HCT116 (cell line): ENCODE measurements at regions of chr10 and their contacts with region 1.

Region 1: GRCh38 chr10:26334932-26335573 is 103.1 kb upstream of the APBB1IP start:
- DNase-seq: peak; percentile 66
- ATAC-seq: peak; percentile 95
- H3K4me3 ChIP-seq: peak overlapping the region; percentile 21 to 48
- H3K27ac ChIP-seq: no peak overlapping the region
- H3K4me1 ChIP-seq: peaks cover 0 to 7% of the 10 kb centered on the region in 2 experiments; a peak in 1 of 4 replicates
- H3K27me3 ChIP-seq: no peaks in the 10 kb centered on the region
- CTCF ChIP-seq: peak; percentile 64 to 84 (median 76)
- POLR2A ChIP-seq: no peak
- RAD21 ChIP-seq: peak; percentile 93

Region 2: GRCh38 chr10:26534384-26534783 is 199.3 kb after region 1 on chr10:
- CTCF ChIA-PET with region 1: interaction called, 11 read pairs
- POLR2A ChIA-PET with region 1: no interaction called
- RAD21 ChIA-PET with region 1: no interaction called
- intact Hi-C with region 1: no loop called
- DNase-seq: peak; percentile 37
- ATAC-seq: peak; percentile 93
- H3K4me3 ChIP-seq: no peak overlapping the region
- H3K27ac ChIP-seq: no peak overlapping the region
- H3K4me1 ChIP-seq: peaks cover 0 to 3% of the 10 kb centered on the region in 2 experiments; a peak in 1 of 4 replicates
- H3K27me3 ChIP-seq: no peaks in the 10 kb centered on the region
- CTCF ChIP-seq: peak; percentile 8 to 72 (median 71); a peak in 4 of 6 replicates
- POLR2A ChIP-seq: no peak
- RAD21 ChIP-seq: peak; percentile 25; the same call in 1 of the 2 replicates

Region 3: GRCh38 chr10:26556748-26557640 is 221.9 kb after region 1 on chr10:
- CTCF ChIA-PET with region 1: interaction called, 40 read pairs
- POLR2A ChIA-PET with region 1: no interaction called
- RAD21 ChIA-PET with region 1: interaction called, 3 read pairs
- intact Hi-C with region 1: no loop called
- DNase-seq: peak; percentile 50
- ATAC-seq: peak; percentile 89
- H3K4me3 ChIP-seq: peak overlapping the region; percentile 10 to 31
- H3K27ac ChIP-seq: no peak overlapping the region
- H3K4me1 ChIP-seq: peaks cover 0 to 7% of the 10 kb centered on the region in 2 experiments; a peak in 2 of 4 replicates
- H3K27me3 ChIP-seq: peaks cover 22% of the 10 kb centered on the region; the same call in 1 of the 2 replicates
- CTCF ChIP-seq: peak; percentile 75 to 93 (median 76)
- POLR2A ChIP-seq: no peak
- RAD21 ChIP-seq: peak; percentile 91

Region 4: DNA sequence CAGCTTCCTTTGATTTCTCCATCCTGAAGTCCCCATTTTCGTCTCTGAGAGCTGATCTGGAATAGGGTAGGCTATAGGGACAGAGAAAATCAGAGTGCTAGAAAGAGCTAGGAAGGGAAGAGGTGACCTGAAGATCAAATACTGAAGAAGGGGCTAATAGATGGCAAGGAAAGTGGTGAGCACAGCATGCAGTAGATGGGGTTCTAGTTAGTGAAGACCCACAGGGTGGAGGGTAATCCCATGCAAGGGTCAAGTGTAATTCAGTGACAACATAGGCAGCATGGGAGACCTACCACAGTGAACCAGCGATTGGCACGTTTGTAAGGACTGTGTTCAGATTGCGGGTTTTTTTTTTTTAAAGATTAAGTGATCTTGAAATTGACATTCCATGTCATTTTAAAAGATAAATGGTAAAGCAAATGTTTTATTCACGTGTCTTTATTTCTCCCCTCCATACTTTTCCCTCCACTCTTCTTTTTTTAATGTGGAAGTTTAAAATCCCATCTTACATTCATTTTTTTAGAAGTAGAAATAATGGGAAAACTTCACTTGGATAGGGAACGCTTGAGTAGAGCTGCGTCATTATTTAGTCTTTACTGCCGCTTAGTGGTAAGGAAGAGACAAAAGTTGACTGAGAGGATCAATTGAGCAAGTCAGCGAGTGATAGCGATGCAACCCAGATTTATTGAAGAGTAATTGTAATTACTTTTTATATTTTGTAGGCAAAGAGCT is 546.7 kb after region 1 on chr10:
- CTCF ChIA-PET with region 1: interaction called, 24 read pairs
- POLR2A ChIA-PET with region 1: no interaction called
- RAD21 ChIA-PET with region 1: interaction called in 1 of 2 experiments, 4 read pairs
- intact Hi-C with region 1: loop called (anchors 1 kb)
- DNase-seq: peak; percentile 69
- ATAC-seq: peak; percentile 95
- H3K4me3 ChIP-seq: peak overlapping the region; percentile 32 to 44
- H3K27ac ChIP-seq: no peak overlapping the region
- H3K4me1 ChIP-seq: peaks cover 0 to 6% of the 10 kb centered on the region in 2 experiments; a peak in 1 of 4 replicates
- H3K27me3 ChIP-seq: no peaks in the 10 kb centered on the region
- CTCF ChIP-seq: peak; percentile 69 to 87 (median 72)
- POLR2A ChIP-seq: no peak
- RAD21 ChIP-seq: peak; percentile 93